Activated CD4-positive, alpha-beta memory T cell treated with anti-CD3 and anti-CD28 coated beads for 36 hours (primary cell): ENCODE measurements at regions of chr7 and their contacts with region 1.

Region 1: GRCh38 chr7:50304158-50304910 is at the start of gene IKZF1:
- DNase-seq: peak; percentile 76
- H3K4me3 Mint-ChIP-seq: peak within 1 kb of the TSS; percentile 86
- H3K27ac Mint-ChIP-seq: peak within 1 kb of the TSS; percentile 94
- H3K4me1 Mint-ChIP-seq: peaks cover 42% of the 10 kb centered on the region
- H3K27me3 Mint-ChIP-seq: no peaks in the 10 kb centered on the region
- total RNA-seq, gene IKZF1: 207 to 216 TPM

Region 2: DNA sequence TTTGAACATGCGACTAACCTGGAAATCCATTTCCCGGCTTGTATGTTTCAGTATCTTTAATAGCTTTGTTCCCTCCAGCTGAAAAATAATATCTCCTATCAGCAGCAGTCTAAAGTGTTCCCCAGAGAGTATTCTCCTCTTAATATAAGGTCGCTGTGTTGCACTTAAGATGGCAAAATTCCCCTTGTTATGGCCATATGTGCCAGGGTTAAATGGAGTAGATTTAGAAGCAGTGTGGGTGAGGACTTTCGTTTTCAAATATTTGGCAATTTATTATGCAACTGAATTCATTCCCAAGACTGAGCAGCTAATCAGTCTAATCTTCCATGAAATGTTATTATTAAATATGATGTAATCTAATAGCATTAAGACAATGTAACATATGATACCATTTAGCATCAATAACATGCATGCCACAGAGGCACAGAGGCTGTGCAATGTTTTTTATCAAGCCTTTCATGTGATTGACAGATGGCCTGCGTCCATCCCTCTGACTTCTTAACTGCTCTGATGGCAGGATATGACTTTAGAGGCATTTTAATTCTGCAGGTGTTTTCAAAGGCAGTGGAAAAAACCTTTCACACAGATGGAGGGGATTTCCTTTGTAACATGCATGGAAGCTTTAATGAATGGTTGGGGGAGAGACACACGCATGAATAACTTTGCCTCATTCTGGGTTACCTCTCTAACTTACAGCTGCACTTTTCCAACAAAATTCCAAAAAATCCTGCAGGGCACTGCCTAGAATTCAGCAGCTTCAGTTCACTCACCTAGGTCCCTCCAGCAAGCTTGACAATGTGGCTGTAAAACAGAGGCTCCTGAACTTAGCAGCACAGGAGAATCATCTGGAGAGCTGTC is 156.2 kb before region 1 on chr7:
- CTCF ChIA-PET with region 1: interaction called, 4 read pairs
- POLR2A ChIA-PET with region 1: no interaction called
- intact Hi-C with region 1: loop called (anchors 2 kb)
- DNase-seq: peak; percentile 41
- H3K4me3 Mint-ChIP-seq: peak overlapping the region; percentile 16
- H3K27ac Mint-ChIP-seq: peak overlapping the region; percentile 54
- H3K4me1 Mint-ChIP-seq: peaks cover 70% of the 10 kb centered on the region
- H3K27me3 Mint-ChIP-seq: no peaks in the 10 kb centered on the region

Region 3: DNA sequence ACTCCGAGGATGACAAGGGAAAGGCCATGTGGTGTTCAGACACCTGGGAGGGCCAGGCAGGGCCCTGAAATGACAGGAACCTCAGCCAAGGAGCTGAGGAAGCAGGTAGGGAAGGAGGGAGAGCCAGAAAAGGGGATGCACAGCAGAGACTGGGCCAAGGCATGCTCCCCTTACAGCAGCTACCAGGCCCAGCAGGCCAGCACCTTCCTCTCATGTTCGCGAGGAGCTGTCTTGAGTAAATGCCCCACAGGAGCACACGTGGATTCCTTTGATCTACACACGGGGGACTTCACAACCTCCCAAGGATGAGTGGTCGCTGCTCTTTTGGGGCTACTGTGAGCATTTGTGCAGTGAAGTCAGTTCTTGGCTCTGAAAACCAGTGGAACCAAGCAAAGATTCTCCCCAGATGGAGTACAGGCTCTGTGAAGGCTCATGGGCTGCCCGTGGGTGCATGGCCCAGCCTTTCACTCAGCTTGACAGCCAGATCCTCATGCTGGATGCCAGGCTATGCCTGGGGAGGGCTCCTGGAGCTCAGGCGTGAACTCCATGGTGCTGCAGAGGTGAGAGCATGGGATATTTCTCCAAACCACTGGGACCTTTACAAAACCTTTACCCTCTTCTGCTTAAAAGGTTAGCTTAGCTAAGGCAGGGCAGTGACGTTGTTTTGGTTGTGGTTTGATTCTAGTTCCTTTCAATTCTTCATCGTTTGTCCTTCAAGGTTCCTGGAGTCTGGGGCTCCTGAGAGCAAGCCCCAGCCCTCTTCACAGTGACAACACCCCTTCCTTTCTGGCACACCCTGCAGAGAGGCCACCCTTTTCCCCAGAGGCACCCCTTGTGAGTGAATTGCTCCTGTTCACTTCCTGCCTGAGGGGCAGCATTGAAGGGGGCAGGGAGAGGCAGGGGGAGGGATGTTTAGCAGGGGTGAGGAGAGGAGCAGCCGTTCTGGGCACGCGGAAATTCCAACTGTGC is 137.1 kb before region 1 on chr7:
- CTCF ChIA-PET with region 1: no interaction called
- POLR2A ChIA-PET with region 1: no interaction called
- intact Hi-C with region 1: no loop called
- DNase-seq: peak; percentile 30
- H3K4me3 Mint-ChIP-seq: no peak overlapping the region
- H3K27ac Mint-ChIP-seq: peak overlapping the region; percentile 59
- H3K4me1 Mint-ChIP-seq: peaks cover 54% of the 10 kb centered on the region
- H3K27me3 Mint-ChIP-seq: no peaks in the 10 kb centered on the region

Region 4: GRCh38 chr7:50293509-50294179 is 10.7 kb before region 1 on chr7:
- CTCF ChIA-PET with region 1: interaction called, 4 read pairs
- POLR2A ChIA-PET with region 1: interaction called, 7 read pairs
- intact Hi-C with region 1: loop called (anchors 1 kb)
- DNase-seq: no peak
- H3K4me3 Mint-ChIP-seq: no peak overlapping the region
- H3K27ac Mint-ChIP-seq: no peak overlapping the region
- H3K4me1 Mint-ChIP-seq: peaks cover 26% of the 10 kb centered on the region
- H3K27me3 Mint-ChIP-seq: peaks cover 1% of the 10 kb centered on the region

Region 5: DNA sequence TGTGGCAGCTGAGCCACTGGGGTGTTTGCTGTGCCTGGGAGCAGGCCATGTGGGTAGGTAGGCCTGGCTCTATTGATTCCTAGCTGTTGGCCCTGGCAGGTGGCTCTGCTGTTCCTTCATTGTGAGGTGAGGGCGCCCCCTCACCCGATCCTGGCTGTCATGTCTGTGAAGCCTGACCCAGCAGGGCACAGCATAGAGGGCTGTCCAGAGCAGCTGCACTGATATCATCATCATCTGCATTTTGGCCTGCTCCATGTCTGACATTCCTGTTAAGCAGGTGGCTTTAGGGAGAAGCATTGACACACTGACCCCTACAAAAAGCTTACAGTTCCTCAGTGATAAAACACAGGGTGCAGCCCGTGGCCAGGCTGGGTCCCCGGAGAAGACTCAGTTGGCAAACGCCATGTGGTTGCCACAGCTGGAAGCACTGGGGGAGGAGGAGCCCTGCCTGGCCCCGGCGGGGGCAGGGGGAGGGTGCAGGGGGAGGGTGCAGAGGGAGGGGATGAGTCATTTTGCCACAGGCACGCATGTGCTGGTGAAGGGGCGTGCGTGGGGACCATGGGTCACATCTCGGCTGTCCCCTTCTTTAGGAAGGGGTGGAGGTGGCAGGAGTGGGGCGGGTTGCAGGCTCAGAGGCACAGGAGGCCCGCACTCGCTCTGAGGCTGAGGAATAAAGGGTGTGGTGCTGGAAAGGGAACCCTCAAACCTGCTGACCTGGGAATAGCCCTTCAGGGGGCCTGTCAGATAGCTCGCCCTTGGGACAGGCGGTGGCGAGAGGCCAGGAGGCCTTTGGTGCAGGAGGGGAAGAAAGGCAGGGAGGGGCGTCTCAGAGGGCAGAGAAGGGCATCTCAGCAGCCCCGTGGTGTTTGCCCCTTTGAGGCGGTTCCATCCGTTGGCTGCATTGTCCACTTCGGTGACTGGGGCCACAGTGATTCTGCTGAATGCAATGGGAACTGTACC is 31.7 kb after region 1 on chr7:
- CTCF ChIA-PET with region 1: interaction called, 8 read pairs
- POLR2A ChIA-PET with region 1: interaction called, 217 read pairs
- intact Hi-C with region 1: loop called (anchors 1 kb)
- DNase-seq: peak; percentile 93
- H3K4me3 Mint-ChIP-seq: no peak overlapping the region
- H3K27ac Mint-ChIP-seq: no peak overlapping the region
- H3K4me1 Mint-ChIP-seq: peaks cover 2% of the 10 kb centered on the region
- H3K27me3 Mint-ChIP-seq: no peaks in the 10 kb centered on the region

Region 6: DNA sequence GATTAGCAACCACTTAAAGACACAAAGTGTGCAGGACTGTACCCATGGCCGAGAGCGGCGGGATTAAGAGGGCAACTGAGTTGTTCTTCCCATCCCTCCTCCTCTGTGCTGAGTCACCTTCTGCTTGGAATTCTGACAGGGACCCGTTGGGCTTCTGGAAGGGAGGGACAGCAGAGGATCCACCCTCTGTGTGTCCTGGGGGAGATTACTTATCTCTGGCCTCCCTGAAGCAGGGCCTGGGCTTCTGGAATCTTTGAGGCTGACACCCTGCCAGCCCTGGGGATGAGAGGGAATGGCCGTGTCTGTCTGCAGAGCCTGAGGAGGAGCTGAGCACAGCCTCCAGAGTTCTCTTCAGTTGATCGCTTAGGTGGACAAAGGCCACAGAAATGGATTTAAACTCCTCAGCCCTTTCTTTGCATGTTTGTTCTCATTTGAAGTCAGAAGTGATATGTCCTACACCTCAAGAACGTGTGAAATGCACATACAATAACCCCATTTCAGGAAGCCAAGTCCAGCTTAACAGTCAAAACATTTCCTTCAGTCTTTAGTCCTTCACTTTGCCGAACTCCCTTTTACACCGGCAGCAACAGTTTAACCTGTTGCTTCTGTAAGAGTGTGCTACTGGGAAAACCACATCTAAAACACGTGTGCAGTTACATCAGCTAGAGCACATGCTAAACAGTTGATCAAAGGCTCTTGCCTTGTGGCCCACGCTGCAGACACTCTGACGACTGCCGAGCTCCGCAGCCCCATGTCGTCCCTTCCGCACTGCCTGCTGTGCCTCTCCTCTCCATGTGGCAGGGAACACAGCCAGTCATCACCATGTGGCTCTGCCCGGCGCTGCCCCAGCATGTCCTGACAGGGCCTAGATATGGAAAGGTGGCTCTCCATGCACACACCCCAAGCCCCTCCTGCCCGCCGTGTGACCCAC is 55.9 kb after region 1 on chr7:
- CTCF ChIA-PET with region 1: interaction called, 4 read pairs
- POLR2A ChIA-PET with region 1: interaction called, 36 read pairs
- intact Hi-C with region 1: no loop called
- DNase-seq: peak; percentile 90
- H3K4me3 Mint-ChIP-seq: peak overlapping the region; percentile 61
- H3K27ac Mint-ChIP-seq: peak overlapping the region; percentile 97
- H3K4me1 Mint-ChIP-seq: peaks cover 98% of the 10 kb centered on the region
- H3K27me3 Mint-ChIP-seq: no peaks in the 10 kb centered on the region